Activated CD8-positive, alpha-beta T cell treated with anti-CD3 and anti-CD28 coated beads, Interleukin-2, amount 10 ng/mL, durations not matched to agents 7 days and 5 days (primary cell): ENCODE measurements at regions of chr3 and their contacts with region 1.

Region 1: GRCh38 chr3:15199493-15200105 is 6.4 kb upstream of the CAPN7 start:
- DNase-seq: no peak
- ATAC-seq: no peak
- H3K4me3 Mint-ChIP-seq: no peak overlapping the region
- H3K27ac Mint-ChIP-seq: no peak overlapping the region
- H3K4me1 Mint-ChIP-seq: peaks cover 9% of the 10 kb centered on the region
- H3K27me3 Mint-ChIP-seq: peaks cover 25% of the 10 kb centered on the region

Region 2: GRCh38 chr3:15405448-15406050 is 205.9 kb after region 1 on chr3:
- CTCF ChIA-PET with region 1: interaction called, 45 read pairs
- POLR2A ChIA-PET with region 1: interaction called, 3 read pairs
- DNase-seq: peak; percentile 52
- ATAC-seq: peak; percentile 81
- H3K4me3 Mint-ChIP-seq: no peak overlapping the region
- H3K27ac Mint-ChIP-seq: no peak overlapping the region
- H3K4me1 Mint-ChIP-seq: peaks cover 12% of the 10 kb centered on the region
- H3K27me3 Mint-ChIP-seq: peaks cover 1% of the 10 kb centered on the region